GM12878 (cell line): ENCODE measurements at regions of chr14 and their contacts with region 1.

Region 1: GRCh38 chr14:76710056-76711010 is 50.9 kb upstream of the VASH1 start:
- DNase-seq: no peak
- ATAC-seq: peak; percentile 64
- H3K4me3 ChIP-seq: no peak overlapping the region
- H3K27ac ChIP-seq: no peak overlapping the region
- H3K4me1 ChIP-seq: no peaks in the 10 kb centered on the region
- H3K27me3 ChIP-seq: no peaks in the 10 kb centered on the region; a peak in 2 of 4 replicates
- CTCF ChIP-seq: peak; percentile 65 to 73 (median 69)
- EP300 ChIP-seq: no peak
- POLR2A ChIP-seq: no peak
- RAD21 ChIP-seq: peak; percentile 74

Region 2: GRCh38 chr14:76699939-76700590 is 10.3 kb before region 1 on chr14:
- CTCF ChIA-PET with region 1: interaction called, 23 read pairs
- POLR2A ChIA-PET with region 1: no interaction called
- RAD21 ChIA-PET with region 1: no interaction called
- SMC1A ChIA-PET with region 1: interaction called, 5 read pairs
- in situ Hi-C with region 1: no loop called
- intact Hi-C with region 1: no loop called
- DNase-seq: no peak
- ATAC-seq: no peak
- H3K4me3 ChIP-seq: no peak overlapping the region
- H3K27ac ChIP-seq: no peak overlapping the region
- H3K4me1 ChIP-seq: no peaks in the 10 kb centered on the region
- H3K27me3 ChIP-seq: no peaks in the 10 kb centered on the region
- CTCF ChIP-seq: no peak
- EP300 ChIP-seq: no peak
- POLR2A ChIP-seq: no peak
- RAD21 ChIP-seq: no peak

Region 3: DNA sequence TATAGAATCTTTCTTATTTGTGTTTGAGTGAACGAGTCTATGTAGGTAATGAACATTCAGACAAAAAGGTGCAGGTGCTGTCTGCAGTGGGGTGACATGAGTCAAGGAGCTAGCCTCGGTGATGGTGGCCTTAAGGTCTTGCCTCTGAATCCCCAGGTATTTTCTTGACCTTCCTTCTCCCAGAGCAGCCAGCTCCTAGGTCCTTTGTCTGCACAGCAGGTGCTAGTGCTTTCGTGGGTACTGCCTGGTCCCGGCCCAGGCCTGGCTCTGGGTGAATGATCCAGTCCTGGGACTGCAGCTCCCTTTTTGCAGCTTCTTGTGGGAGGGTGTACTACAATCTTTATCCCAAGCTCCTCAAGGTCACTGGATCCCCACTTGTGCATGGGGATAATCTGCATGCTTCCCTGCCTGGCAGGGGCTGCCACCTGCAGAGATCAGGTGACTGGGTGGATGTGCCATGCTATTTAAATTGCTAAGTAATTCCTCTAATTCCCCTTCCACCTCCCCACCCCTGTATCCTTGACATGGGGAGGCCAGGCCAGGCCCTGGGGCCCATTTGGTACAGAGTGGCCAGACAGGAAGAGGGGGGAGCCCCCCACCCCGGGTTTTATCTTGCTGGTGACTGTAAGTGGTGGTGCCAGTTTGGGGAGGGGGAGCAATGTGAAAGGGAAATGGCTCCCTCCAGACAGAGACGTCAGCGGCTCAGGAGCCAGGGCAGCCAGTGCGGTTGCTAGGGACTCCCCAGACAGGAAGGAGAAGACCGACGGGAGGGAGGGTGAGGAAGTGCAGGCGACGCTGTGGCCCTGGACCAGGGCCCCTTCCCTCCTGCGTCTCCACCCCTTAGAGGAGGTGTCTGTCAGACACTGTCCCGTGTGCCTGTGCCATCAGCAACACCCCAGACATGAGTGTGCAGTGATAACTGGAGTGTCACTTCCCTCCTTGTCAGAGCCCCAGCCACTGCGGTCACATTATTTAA is 57.6 kb after region 1 on chr14:
- CTCF ChIA-PET with region 1: interaction called, 16 read pairs
- POLR2A ChIA-PET with region 1: no interaction called
- RAD21 ChIA-PET with region 1: no interaction called
- SMC1A ChIA-PET with region 1: interaction called, 4 read pairs
- in situ Hi-C with region 1: no loop called
- intact Hi-C with region 1: no loop called
- DNase-seq: peak; percentile 47
- ATAC-seq: peak; percentile 97
- H3K4me3 ChIP-seq: no peak overlapping the region
- H3K27ac ChIP-seq: no peak overlapping the region
- H3K4me1 ChIP-seq: peaks cover 13% of the 10 kb centered on the region
- H3K27me3 ChIP-seq: no peaks in the 10 kb centered on the region; a peak in 1 of 4 replicates
- CTCF ChIP-seq: no peak
- EP300 ChIP-seq: no peak
- POLR2A ChIP-seq: peak; percentile 36; the same call in 1 of the 2 replicates
- RAD21 ChIP-seq: no peak

Region 4: GRCh38 chr14:76812211-76813044 is 102.1 kb after region 1 on chr14 and contains the start of gene ANGEL1:
- CTCF ChIA-PET with region 1: interaction called, 132 read pairs
- POLR2A ChIA-PET with region 1: interaction called, 3 read pairs
- RAD21 ChIA-PET with region 1: interaction called, 30 read pairs
- SMC1A ChIA-PET with region 1: interaction called, 23 read pairs
- in situ Hi-C with region 1: no loop called
- intact Hi-C with region 1: loop called (anchors 1 kb)
- DNase-seq: peak; percentile 79
- ATAC-seq: peak; percentile 96
- H3K4me3 ChIP-seq: peak within 1 kb of the TSS; percentile 96
- H3K27ac ChIP-seq: peak within 1 kb of the TSS; percentile 23
- H3K4me1 ChIP-seq: no peaks in the 10 kb centered on the region
- H3K27me3 ChIP-seq: peaks cover 0 to 2% of the 10 kb centered on the region in 2 experiments; a peak in 1 of 4 replicates
- CTCF ChIP-seq: no peak
- EP300 ChIP-seq: no peak
- POLR2A ChIP-seq: peak; percentile 96
- RAD21 ChIP-seq: no peak
- polyA plus RNA-seq, gene ANGEL1: 1.7 to 2.8 TPM

Region 5: DNA sequence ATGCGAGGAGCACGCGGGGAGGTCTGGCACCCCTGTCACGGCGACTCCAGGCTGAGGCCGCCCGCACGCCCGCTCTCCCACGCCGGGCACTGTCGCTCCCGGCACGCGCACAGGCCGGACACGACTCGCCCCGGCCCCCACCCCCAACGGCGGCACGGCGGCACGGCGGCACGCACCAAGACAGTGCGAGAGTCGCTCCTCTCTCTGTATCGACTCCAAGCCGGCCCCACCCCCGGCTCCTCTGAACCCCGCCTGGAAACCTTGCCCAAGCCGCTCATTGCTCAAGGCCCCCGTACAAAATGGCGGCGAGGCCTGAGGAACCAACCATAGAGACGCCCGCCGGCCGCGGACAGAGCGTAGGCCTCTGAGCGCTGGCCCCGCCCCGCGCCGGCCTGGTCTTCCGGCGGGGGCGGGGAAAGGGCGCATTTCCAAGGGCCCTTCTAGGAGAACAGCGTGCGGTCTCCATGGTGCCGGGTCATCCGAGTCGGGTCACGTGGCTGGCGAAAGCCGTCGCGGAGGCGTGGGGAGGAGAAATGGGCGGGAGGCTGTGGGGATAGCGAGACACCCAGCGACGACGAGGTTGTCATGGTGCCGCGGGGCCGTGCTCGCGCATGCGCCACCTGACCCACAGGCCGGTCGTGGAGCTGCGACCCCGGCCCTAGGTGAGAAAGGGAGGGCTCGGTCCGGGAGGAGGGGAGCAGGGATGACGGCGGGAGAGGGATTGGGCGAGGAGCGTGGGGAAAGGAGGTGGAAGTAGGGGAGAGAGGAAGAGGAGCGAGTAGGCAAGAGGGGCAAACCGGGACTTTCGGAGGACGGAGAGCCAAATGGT is 387.6 kb after region 1 on chr14 and contains the start of gene CIPC:
- CTCF ChIA-PET with region 1: interaction called, 9 read pairs
- POLR2A ChIA-PET with region 1: interaction called, 7 read pairs
- RAD21 ChIA-PET with region 1: interaction called, 3 read pairs
- SMC1A ChIA-PET with region 1: interaction called, 3 read pairs
- in situ Hi-C with region 1: no loop called
- intact Hi-C with region 1: loop called (anchors 5 kb)
- DNase-seq: peak; percentile 97
- ATAC-seq: peak; percentile 90
- H3K4me3 ChIP-seq: peak within 1 kb of the TSS; percentile 83
- H3K27ac ChIP-seq: peak within 1 kb of the TSS; percentile 87
- H3K4me1 ChIP-seq: peaks cover 17% of the 10 kb centered on the region
- H3K27me3 ChIP-seq: no peaks in the 10 kb centered on the region
- CTCF ChIP-seq: peak in 1 of 3 experiments; percentile 7; a peak in 1 of 6 replicates
- EP300 ChIP-seq: peak in 1 of 2 experiments; percentile 78; a peak in 2 of 4 replicates
- POLR2A ChIP-seq: peak; percentile 86
- RAD21 ChIP-seq: no peak
- polyA plus RNA-seq, gene CIPC: 5.6 to 6.6 TPM